ENCODE measurements at regions of chr15 and their contacts with region 1.

Region 1: GRCh38 chr15:50145451-50145872 is 26.4 kb upstream of the ATP8B4 start:
- DNase-seq: no peak
- ATAC-seq: no peak
- H3K4me3 Mint-ChIP-seq: no peak overlapping the region
- H3K27ac Mint-ChIP-seq: no peak overlapping the region
- H3K4me1 Mint-ChIP-seq: peaks cover 32% of the 10 kb centered on the region
- H3K27me3 Mint-ChIP-seq: no peaks in the 10 kb centered on the region

Region 2: DNA sequence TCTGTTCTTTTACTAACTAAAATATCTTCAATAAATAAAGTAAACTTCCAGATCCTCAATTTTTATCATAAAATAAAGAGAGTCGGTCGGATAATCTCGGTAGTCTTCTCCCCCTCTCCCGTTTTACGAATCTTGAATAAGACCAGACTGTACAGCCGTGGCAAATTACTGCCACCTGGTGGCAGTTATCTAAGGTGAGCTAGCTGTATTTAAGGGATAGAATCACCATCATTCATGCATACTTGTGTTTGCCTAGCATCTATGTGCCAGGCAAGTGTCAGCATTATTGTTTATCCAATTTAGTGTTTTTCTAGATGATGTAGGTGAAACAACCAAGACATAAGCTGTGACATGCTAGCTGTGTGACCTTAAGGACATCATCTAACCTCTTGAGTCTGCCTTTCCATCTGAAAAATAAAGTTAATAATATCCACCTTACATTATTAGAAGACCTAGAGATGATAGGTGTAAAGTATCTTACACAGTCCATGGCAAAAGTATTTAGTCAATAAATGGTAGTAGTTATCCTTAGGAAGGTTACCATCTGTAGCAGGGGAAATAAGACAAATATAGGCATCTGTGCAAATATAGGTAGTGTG is 1792.9 kb before region 1 on chr15:
- CTCF ChIA-PET with region 1: no interaction called
- POLR2A ChIA-PET with region 1: no interaction called
- intact Hi-C with region 1: loop called in 1 of 2 experiments (anchors 10 kb)
- DNase-seq: peak; percentile 69
- ATAC-seq: peak; percentile 79
- H3K4me3 Mint-ChIP-seq: no peak overlapping the region
- H3K27ac Mint-ChIP-seq: no peak overlapping the region
- H3K4me1 Mint-ChIP-seq: no peaks in the 10 kb centered on the region
- H3K27me3 Mint-ChIP-seq: peaks cover 5% of the 10 kb centered on the region

Region 3: DNA sequence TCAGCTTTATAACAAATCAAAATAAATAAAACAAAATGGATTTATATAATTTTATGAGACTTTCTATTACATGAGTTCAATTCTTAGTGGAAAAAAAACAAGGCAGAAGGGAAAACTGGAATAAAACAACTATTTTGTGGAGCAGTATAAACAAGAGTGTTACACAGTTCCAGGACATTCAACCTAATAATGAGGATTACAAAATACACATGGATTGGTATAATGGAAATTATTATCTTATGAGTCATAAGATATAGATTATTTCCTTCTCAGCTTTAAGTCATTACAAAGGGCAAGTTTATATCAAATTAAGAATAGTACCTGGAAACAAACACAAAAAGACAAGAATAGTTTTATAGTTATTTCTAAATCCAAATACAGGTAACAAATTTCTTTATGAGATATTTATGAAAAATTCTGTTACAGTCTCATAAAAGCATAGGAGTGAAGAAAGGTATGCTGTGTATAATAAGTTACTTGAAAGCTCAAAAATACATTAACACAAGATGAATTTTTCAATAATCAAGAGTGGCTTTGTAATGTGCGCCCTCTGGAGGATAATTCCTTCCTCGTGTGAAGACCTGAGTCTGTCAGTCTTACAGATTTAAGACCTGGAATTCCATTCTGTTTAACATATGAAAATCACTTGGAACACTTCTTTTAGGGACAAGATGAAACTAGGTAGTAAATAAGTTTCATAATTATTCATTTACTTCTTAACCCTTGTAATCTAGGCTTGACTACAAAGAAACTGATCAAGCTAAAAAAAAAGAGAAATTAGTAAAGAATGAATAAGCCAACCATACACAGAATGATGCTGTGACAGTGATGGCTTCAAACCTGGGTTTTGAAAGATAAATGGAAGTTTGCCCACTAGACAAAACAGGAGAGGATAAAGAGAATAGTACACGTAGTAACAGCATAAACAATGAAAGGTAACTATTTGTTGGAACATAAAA is 999.5 kb before region 1 on chr15:
- CTCF ChIA-PET with region 1: no interaction called
- POLR2A ChIA-PET with region 1: no interaction called
- intact Hi-C with region 1: loop called in 1 of 2 experiments (anchors 10 kb)
- DNase-seq: peak; percentile 47
- ATAC-seq: peak; percentile 36
- H3K4me3 Mint-ChIP-seq: no peak overlapping the region
- H3K27ac Mint-ChIP-seq: peak overlapping the region; percentile 10
- H3K4me1 Mint-ChIP-seq: peaks cover 38% of the 10 kb centered on the region
- H3K27me3 Mint-ChIP-seq: no peaks in the 10 kb centered on the region

Region 4: DNA sequence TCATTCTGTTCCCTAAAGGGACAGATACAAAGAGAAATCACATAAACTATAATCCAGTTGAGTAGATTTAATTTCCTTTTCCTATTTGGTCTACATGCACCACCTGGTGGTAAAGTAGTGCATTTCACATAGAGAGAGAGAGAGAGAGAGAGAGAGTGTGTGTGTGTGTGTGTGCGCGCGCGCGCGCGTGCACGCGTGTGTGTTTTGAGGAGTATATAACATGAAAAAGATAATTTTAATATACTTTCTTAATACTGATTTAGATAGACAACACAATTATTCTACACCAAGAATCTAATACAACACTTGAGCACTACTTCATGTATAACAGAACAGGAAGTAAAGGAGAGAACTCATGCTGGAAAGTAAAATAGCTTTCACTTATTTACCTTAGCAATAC is 723.5 kb before region 1 on chr15:
- CTCF ChIA-PET with region 1: no interaction called
- POLR2A ChIA-PET with region 1: no interaction called
- intact Hi-C with region 1: loop called in 1 of 2 experiments (anchors 2 kb)
- DNase-seq: peak; percentile 51
- ATAC-seq: peak; percentile 26
- H3K4me3 Mint-ChIP-seq: no peak overlapping the region
- H3K27ac Mint-ChIP-seq: no peak overlapping the region
- H3K4me1 Mint-ChIP-seq: peaks cover 4% of the 10 kb centered on the region
- H3K27me3 Mint-ChIP-seq: no peaks in the 10 kb centered on the region

Region 5: GRCh38 chr15:49876401-49877038 is 268.9 kb before region 1 on chr15:
- CTCF ChIA-PET with region 1: no interaction called
- POLR2A ChIA-PET with region 1: no interaction called
- intact Hi-C with region 1: loop called (anchors 1 to 2 kb)
- DNase-seq: no peak
- ATAC-seq: no peak
- H3K4me3 Mint-ChIP-seq: no peak overlapping the region
- H3K27ac Mint-ChIP-seq: no peak overlapping the region
- H3K4me1 Mint-ChIP-seq: no peaks in the 10 kb centered on the region
- H3K27me3 Mint-ChIP-seq: peaks cover 2% of the 10 kb centered on the region

Region 6: GRCh38 chr15:50247819-50248655 is 102.6 kb after region 1 on chr15:
- CTCF ChIA-PET with region 1: no interaction called
- POLR2A ChIA-PET with region 1: no interaction called
- intact Hi-C with region 1: no loop called
- DNase-seq: peak; percentile 83
- ATAC-seq: peak; percentile 99
- H3K4me3 Mint-ChIP-seq: peak overlapping the region; percentile 67
- H3K27ac Mint-ChIP-seq: peak overlapping the region; percentile 96
- H3K4me1 Mint-ChIP-seq: peaks cover 33% of the 10 kb centered on the region
- H3K27me3 Mint-ChIP-seq: no peaks in the 10 kb centered on the region

Region 7: DNA sequence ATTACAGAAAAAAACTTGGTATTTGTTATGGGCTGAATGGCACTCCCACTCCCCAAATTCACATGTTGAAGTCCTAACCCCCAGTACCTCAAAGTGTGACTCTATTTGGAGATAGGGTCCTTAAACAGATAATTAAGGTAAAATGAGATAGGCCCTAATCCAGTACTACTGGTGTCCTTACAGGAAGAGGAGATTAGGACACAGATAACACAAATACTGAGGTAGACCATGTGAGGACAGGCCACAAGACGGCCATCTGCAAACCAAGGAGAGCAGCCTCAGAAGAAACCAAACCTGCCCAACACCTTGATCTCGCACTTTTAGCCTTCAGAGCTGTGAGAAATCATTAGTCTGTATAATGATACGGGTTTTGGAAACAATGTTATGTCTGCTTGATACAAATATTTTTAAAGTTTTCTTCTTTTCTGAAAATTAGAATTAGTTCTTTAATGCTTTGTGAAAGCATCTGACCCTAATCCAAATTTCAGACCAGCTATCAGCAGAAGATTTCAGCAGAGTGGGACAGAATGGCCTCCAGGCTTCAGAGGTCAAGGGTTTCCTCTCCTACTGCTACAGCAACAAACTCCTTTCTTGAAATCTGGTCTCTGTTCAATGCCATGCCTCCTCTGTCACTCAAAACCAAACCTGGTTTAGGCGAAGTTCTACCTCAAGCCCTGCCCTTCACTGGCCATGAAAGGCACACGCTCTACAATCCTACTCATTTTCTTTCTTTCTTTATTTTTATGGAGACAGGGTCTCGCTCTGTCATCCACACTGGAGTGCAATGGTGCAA is 142.1 kb after region 1 on chr15:
- CTCF ChIA-PET with region 1: no interaction called
- POLR2A ChIA-PET with region 1: no interaction called
- intact Hi-C with region 1: no loop called
- DNase-seq: no peak
- ATAC-seq: no peak
- H3K4me3 Mint-ChIP-seq: no peak overlapping the region
- H3K27ac Mint-ChIP-seq: no peak overlapping the region
- H3K4me1 Mint-ChIP-seq: no peaks in the 10 kb centered on the region
- H3K27me3 Mint-ChIP-seq: no peaks in the 10 kb centered on the region

Measured in activated CD4-positive, alpha-beta T cell treated with anti-CD3 and anti-CD28 coated beads for 36 hours (primary cell).